Aorta (tissue), 5 donors: ENCODE measurements at regions of chr15 and their contacts with region 1.

Region 1: DNA sequence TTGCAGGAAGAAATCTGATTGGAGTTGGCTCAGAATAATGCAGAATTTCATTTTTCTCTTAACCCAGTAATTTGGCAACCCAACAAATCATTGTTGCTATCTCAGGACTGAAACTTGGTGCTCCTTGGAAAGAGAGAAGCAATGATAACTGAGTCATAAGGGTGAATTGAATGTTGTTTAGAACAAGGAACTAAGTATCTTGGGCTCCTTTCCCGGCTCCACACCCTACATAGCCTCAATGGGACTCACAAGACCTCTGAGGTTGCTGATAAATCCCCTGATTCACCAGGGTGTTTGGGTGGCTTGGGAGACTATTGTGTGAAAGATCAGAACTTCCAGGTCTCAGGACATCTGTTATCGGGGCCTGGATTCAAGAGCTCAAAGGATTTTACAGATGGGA is 7.8 kb upstream of the RAB8B start:
- DNase-seq: no peak
- ATAC-seq: no peak
- H3K4me3 ChIP-seq: no peak overlapping the region
- H3K27ac ChIP-seq: no peak overlapping the region
- H3K4me1 ChIP-seq: no peaks in the 10 kb centered on the region
- H3K27me3 ChIP-seq: no peaks in the 10 kb centered on the region

Region 2: DNA sequence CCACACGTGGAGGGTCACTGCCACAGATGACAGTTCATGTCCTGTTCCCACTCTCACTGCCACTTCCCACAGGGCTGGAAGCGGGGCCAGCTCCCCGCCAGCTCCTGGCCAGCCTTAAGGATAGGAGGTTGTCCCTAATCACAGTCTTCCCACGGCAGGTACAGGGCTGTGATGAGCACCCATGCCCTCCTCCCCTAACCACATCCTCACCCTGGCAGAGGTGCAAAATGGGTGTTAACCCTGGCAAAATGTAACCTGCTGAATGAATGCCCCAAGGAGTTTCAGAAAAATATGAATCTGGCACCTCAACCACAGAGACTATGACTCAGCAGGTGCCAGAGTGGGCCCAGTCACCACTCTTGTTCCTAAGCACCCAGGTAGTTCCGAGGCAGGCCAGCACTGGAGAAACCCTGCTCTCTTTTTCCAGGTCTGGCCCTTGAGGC is 324.2 kb before region 1 on chr15:
- intact Hi-C with region 1: loop called in 1 of 2 experiments (anchors 5 kb)
- DNase-seq: no peak
- ATAC-seq: no peak
- H3K4me3 ChIP-seq: no peak overlapping the region
- H3K27ac ChIP-seq: no peak overlapping the region
- H3K4me1 ChIP-seq: no peaks in the 10 kb centered on the region
- H3K27me3 ChIP-seq: no peaks in the 10 kb centered on the region

Region 3: GRCh38 chr15:63238796-63239195 is 57.1 kb after region 1 on chr15:
- intact Hi-C with region 1: no loop called
- DNase-seq: no peak
- ATAC-seq: no peak
- H3K4me3 ChIP-seq: no peak overlapping the region
- H3K27ac ChIP-seq: no peak overlapping the region
- H3K4me1 ChIP-seq: peaks cover 0 to 2% of the 10 kb centered on the region in 2 donors
- H3K27me3 ChIP-seq: no peaks in the 10 kb centered on the region